A673 (cell line): ENCODE measurements at regions of chr18 and their contacts with region 1.

Region 1: GRCh38 chr18:8890957-8891464 is 185.7 kb downstream of the MTCL1 start:
- DNase-seq: peak; percentile 97
- H3K4me3 ChIP-seq: no peak overlapping the region
- H3K27ac ChIP-seq: peak overlapping the region; percentile 39
- H3K4me1 ChIP-seq: peaks cover 13% of the 10 kb centered on the region
- H3K27me3 ChIP-seq: no peaks in the 10 kb centered on the region
- CTCF ChIP-seq: no peak

Region 2: DNA sequence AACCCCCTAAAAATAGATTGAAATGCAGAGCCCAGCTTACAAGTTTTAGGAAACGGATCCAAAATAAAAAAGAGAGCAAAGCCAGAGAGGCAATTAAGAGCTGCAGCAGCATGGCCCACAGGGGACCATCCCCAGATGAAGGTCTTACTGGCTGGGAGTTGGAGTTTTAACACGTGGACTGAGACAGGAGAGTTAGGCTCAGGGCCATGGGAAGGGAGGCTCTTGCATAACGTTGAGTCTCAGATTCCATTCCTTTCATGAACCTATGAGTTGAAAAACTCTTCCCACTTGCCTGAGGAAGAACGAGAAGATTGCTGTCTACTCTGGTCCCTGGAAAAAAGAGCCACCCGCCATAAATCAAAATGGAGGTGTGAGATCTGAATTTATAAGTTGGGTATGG is 109.7 kb after region 1 on chr18:
- CTCF ChIA-PET with region 1: no interaction called
- POLR2A ChIA-PET with region 1: interaction called, 13 read pairs
- intact Hi-C with region 1: no loop called
- DNase-seq: no peak
- H3K4me3 ChIP-seq: no peak overlapping the region
- H3K27ac ChIP-seq: no peak overlapping the region
- H3K4me1 ChIP-seq: no peaks in the 10 kb centered on the region
- H3K27me3 ChIP-seq: no peaks in the 10 kb centered on the region
- CTCF ChIP-seq: no peak

Region 3: GRCh38 chr18:9017170-9017904 is 126.3 kb after region 1 on chr18:
- CTCF ChIA-PET with region 1: no interaction called
- POLR2A ChIA-PET with region 1: no interaction called
- intact Hi-C with region 1: no loop called
- DNase-seq: peak; percentile 31
- H3K4me3 ChIP-seq: no peak overlapping the region
- H3K27ac ChIP-seq: no peak overlapping the region
- H3K4me1 ChIP-seq: no peaks in the 10 kb centered on the region
- H3K27me3 ChIP-seq: no peaks in the 10 kb centered on the region
- CTCF ChIP-seq: no peak